ENCODE measurements at regions of chr1 and their contacts with region 1.

Region 1: GRCh38 chr1:63773815-63774616 is at the start of gene ROR1:
- DNase-seq: peak; percentile 59 to 97 (median 89)

Region 2: GRCh38 chr1:63739452-63739851 is 34.6 kb before region 1 on chr1:
- intact Hi-C with region 1: no loop called
- DNase-seq: no peak

Region 3: GRCh38 chr1:63877816-63878215 is 103.8 kb after region 1 on chr1:
- intact Hi-C with region 1: no loop called
- DNase-seq: no peak

Region 4: DNA sequence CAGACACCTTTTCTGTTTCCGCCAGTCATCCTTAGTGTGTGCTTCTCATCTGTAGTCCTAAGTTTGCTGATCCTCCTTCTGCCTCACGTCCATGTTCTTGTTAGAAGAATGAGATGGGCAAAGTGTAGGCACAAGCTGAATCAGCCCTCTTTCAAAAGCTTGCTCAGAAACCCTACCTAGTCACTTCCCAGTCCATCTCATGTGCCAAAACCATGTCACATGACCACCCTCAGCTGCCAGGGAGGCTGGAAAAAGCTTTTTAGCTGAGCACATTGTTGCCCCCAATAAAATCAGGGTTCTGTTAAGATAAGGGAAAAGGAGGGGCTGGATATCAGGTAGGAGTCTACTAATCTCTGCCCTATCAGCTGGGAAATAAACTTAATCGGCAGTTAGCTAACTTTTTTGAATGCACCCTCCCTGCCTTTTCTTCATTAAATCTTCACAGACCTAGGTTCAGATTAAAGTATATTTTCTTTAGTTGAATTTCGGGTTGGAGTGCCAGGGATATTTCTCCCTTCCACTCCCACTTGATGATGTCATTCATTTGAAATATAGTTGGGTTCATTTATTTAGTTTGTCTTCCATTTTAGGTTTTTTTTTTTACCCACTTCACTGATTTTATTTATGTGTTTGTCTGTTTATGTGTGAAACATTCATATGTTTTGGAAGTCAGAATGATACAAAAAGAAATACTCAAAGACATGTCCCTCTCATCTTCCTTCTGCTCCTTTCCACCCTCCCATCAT is 129.0 kb after region 1 on chr1:
- intact Hi-C with region 1: loop called (anchors 10 kb)
- DNase-seq: peak in 2 of 42 donors; percentile 16 to 45